ENCODE measurements at regions of chr10 and their contacts with region 1.

Region 1: GRCh38 chr10:63465293-63466143 is at the start of gene JMJD1C:
- DNase-seq: peak; percentile 82 to 90 (median 85)
- H3K4me3 ChIP-seq: peak within 1 kb of the TSS; percentile 66
- H3K27ac ChIP-seq: peak within 1 kb of the TSS; percentile 92 to 95
- H3K4me1 ChIP-seq: no peaks in the 10 kb centered on the region
- H3K27me3 ChIP-seq: no peaks in the 10 kb centered on the region
- CTCF ChIP-seq: peak in 2 of 3 donors; percentile 20 to 34
- EP300 ChIP-seq: no peak
- POLR2A ChIP-seq: peak; percentile 76
- total RNA-seq, gene JMJD1C: 70.9 to 140 (median 80.1) TPM

Region 2: GRCh38 chr10:63268798-63269503 is 196.6 kb before region 1 on chr10:
- intact Hi-C with region 1: loop called in 1 of 4 experiments (anchors 2 kb)
- DNase-seq: peak; percentile 56 to 88 (median 68)
- H3K4me3 ChIP-seq: peak overlapping the region; percentile 50
- H3K27ac ChIP-seq: peak overlapping the region; percentile 37 to 94
- H3K4me1 ChIP-seq: no peaks in the 10 kb centered on the region
- H3K27me3 ChIP-seq: no peaks in the 10 kb centered on the region
- CTCF ChIP-seq: peak in 2 of 3 donors; percentile 52 to 71
- EP300 ChIP-seq: peak; percentile 74
- POLR2A ChIP-seq: peak; percentile 88

Measured in ovary (tissue), 10 donors.